ENCODE measurements at regions of chr2 and their contacts with region 1.

Region 1: GRCh38 chr2:42141687-42142546 is 27.2 kb upstream of the EML4 start:
- DNase-seq: peak in 1 of 9 donors; percentile 35
- ATAC-seq: peak; percentile 68
- H3K4me3 ChIP-seq: no peak overlapping the region
- H3K4me3 Mint-ChIP-seq: peak overlapping the region; percentile 49 to 76 (median 69)
- H3K27ac ChIP-seq: peak overlapping the region; percentile 42
- H3K27ac Mint-ChIP-seq: peak overlapping the region; percentile 36 to 86 (median 67)
- H3K4me1 ChIP-seq: peaks cover 12 to 31% of the 10 kb centered on the region in 2 donors
- H3K4me1 Mint-ChIP-seq: peaks cover 22 to 70% (median 58%) of the 10 kb centered on the region in 7 donors
- H3K27me3 ChIP-seq: no peaks in the 10 kb centered on the region
- H3K27me3 Mint-ChIP-seq: no peaks in the 10 kb centered on the region

Region 2: GRCh38 chr2:42127425-42128424 is 14.2 kb before region 1 on chr2:
- CTCF ChIA-PET with region 1: interaction called, 6 read pairs
- POLR2A ChIA-PET with region 1: interaction called, 13 read pairs
- intact Hi-C with region 1: no loop called
- DNase-seq: peak in 7 of 9 donors; percentile 42 to 69 (median 60)
- ATAC-seq: peak; percentile 63
- H3K4me3 ChIP-seq: peak overlapping the region; percentile 33
- H3K4me3 Mint-ChIP-seq: peak overlapping the region; percentile 63 to 86 (median 78)
- H3K27ac ChIP-seq: peak overlapping the region; percentile 70
- H3K27ac Mint-ChIP-seq: peak overlapping the region; percentile 68 to 97 (median 94)
- H3K4me1 ChIP-seq: peaks cover 87 to 96% of the 10 kb centered on the region in 2 donors
- H3K4me1 Mint-ChIP-seq: peaks cover 72 to 98% (median 92%) of the 10 kb centered on the region in 7 donors
- H3K27me3 ChIP-seq: no peaks in the 10 kb centered on the region
- H3K27me3 Mint-ChIP-seq: no peaks in the 10 kb centered on the region